Mammary epithelial cell (primary cell): ENCODE measurements at regions of chr18 and their contacts with region 1.

Region 1: GRCh38 chr18:24989760-24990593 is 362.0 kb downstream of the ZNF521 start:
- DNase-seq: no peak
- H3K4me3 ChIP-seq: no peak overlapping the region
- H3K27ac ChIP-seq: no peak overlapping the region
- H3K4me1 ChIP-seq: peaks cover 31% of the 10 kb centered on the region
- H3K27me3 ChIP-seq: no peaks in the 10 kb centered on the region
- CTCF ChIP-seq: no peak

Region 2: GRCh38 chr18:24827501-24827900 is 162.5 kb before region 1 on chr18:
- CTCF ChIA-PET with region 1: no interaction called
- dilution Hi-C with region 1: no loop called
- in situ Hi-C with region 1: no loop called
- intact Hi-C with region 1: no loop called
- DNase-seq: no peak
- H3K4me3 ChIP-seq: no peak overlapping the region
- H3K27ac ChIP-seq: no peak overlapping the region
- H3K4me1 ChIP-seq: no peaks in the 10 kb centered on the region
- H3K27me3 ChIP-seq: no peaks in the 10 kb centered on the region
- CTCF ChIP-seq: no peak

Region 3: GRCh38 chr18:25058521-25058920 is 68.5 kb after region 1 on chr18:
- CTCF ChIA-PET with region 1: no interaction called
- dilution Hi-C with region 1: loop called (anchors 10 kb)
- in situ Hi-C with region 1: no loop called
- intact Hi-C with region 1: no loop called
- DNase-seq: no peak
- H3K4me3 ChIP-seq: no peak overlapping the region
- H3K27ac ChIP-seq: no peak overlapping the region
- H3K4me1 ChIP-seq: peaks cover 12% of the 10 kb centered on the region
- H3K27me3 ChIP-seq: no peaks in the 10 kb centered on the region
- CTCF ChIP-seq: no peak